OCI-LY7 (cell line): ENCODE measurements at regions of chr6 and their contacts with region 1.

Region 1: DNA sequence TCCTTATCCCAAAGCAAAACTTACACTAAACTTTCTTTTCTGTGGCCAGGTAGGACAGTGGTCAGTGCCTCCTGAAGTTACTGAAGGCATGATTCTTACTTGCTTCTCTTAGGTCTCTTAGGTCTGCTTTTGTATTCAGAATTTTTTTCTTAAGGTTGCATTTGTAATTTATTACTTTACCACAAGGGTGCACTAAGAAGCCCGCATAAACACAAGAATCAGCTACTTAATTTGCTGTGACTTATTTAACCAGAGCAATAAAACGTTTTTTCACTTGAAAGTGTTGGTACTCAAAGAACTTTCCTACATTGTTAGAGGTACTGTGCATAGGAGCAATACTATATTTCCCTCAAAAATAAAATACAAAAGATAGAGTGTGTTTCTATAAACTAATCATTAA is 75.4 kb upstream of the LAMA2 start:
- DNase-seq: peak; percentile 10
- H3K4me3 ChIP-seq: no peak overlapping the region
- H3K27ac ChIP-seq: no peak overlapping the region
- H3K4me1 ChIP-seq: no peaks in the 10 kb centered on the region
- CTCF ChIP-seq: peak; percentile 70

Region 2: DNA sequence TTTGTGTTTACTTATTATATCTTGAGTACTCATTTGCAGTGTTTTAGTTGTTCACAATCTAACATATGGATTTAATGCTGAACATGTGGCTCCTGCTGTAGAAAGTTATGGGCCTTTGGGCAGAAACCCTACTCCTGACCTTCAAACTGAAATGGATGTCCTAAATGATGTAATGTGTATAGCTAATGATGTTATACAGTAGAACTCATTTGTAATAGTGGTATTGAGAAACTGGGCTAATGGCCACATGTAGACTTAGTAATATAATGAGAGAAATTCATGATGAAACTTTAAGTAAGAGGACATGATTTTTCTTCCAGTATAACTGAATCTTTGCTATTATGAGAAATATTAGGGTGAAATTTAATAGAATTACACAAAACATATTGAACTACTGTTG is 165.9 kb before region 1 on chr6:
- CTCF ChIA-PET with region 1: no interaction called
- POLR2A ChIA-PET with region 1: no interaction called
- intact Hi-C with region 1: no loop called
- DNase-seq: no peak
- H3K4me3 ChIP-seq: no peak overlapping the region
- H3K27ac ChIP-seq: no peak overlapping the region
- H3K4me1 ChIP-seq: no peaks in the 10 kb centered on the region
- CTCF ChIP-seq: no peak

Region 3: DNA sequence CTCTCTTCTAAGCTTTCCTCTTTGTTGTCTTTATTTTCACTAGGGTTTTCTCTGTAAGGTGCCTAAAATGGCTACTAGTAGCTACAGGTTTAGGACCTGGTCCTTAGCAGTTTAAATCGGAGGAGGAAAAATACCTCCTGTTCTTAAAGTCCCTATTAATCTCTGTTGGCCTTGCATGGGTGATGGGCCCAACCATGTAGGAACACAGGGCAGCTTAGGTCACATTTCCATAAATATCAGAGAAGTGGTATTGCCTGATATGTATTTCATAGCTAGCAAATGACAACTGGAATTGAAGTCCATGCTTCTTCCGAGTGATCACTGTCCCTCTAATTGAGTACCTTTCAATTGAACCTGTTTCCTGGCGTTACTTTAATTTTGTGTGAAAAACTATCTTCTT is 145.3 kb after region 1 on chr6:
- CTCF ChIA-PET with region 1: no interaction called
- POLR2A ChIA-PET with region 1: no interaction called
- intact Hi-C with region 1: no loop called
- DNase-seq: no peak
- H3K4me3 ChIP-seq: no peak overlapping the region
- H3K27ac ChIP-seq: no peak overlapping the region
- H3K4me1 ChIP-seq: no peaks in the 10 kb centered on the region
- CTCF ChIP-seq: no peak

Region 4: DNA sequence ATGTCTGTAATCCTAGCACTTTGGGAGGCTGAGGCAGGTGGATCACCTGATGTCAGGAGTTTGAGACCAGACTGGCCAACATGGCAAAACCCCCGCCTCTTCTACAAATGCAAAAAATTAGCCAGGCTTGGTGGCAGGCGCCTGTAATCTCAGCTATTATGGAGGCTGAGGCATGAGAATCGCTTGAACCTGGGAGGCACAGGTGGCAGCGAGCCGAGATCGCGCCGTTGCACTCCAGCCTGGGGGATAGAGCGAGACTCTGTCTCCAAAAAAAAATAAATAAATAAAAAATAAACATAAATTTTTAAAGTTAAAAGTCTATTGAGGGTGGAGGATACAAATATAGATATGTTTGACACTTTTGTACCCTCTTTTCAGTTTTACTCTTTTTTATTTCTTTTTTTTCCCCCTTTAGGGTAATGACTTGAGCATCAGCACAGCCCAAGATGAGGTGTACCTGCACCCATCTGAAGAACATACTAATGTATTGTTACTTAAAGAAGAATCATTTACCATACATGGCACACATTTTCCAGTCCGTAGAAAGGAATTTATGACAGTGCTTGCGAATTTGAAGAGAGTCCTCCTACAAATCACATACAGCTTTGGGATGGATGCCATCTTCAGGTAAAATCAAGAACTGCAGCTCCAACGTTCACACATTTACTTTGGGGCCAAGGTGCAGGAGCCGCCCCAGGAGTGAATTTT is 444.2 kb after region 1 on chr6:
- CTCF ChIA-PET with region 1: no interaction called
- POLR2A ChIA-PET with region 1: no interaction called
- intact Hi-C with region 1: loop called (anchors 5 kb)
- DNase-seq: peak; percentile 53
- H3K4me3 ChIP-seq: no peak overlapping the region
- H3K27ac ChIP-seq: no peak overlapping the region
- H3K4me1 ChIP-seq: no peaks in the 10 kb centered on the region
- CTCF ChIP-seq: peak; percentile 89